Endothelial cell of umbilical vein (primary cell): ENCODE measurements at regions of chr18 and their contacts with region 1.

Region 1: GRCh38 chr18:12271376-12272235 is 17.4 kb downstream of the CIDEA start:
- DNase-seq: peak; percentile 85
- H3K4me3 ChIP-seq: peak overlapping the region; percentile 36 to 63 (median 45)
- H3K27ac ChIP-seq: peak overlapping the region; percentile 50
- H3K4me1 ChIP-seq: no peaks in the 10 kb centered on the region
- H3K27me3 ChIP-seq: no peaks in the 10 kb centered on the region
- CTCF ChIP-seq: peak; percentile 60 to 73
- POLR2A ChIP-seq: no peak

Region 2: DNA sequence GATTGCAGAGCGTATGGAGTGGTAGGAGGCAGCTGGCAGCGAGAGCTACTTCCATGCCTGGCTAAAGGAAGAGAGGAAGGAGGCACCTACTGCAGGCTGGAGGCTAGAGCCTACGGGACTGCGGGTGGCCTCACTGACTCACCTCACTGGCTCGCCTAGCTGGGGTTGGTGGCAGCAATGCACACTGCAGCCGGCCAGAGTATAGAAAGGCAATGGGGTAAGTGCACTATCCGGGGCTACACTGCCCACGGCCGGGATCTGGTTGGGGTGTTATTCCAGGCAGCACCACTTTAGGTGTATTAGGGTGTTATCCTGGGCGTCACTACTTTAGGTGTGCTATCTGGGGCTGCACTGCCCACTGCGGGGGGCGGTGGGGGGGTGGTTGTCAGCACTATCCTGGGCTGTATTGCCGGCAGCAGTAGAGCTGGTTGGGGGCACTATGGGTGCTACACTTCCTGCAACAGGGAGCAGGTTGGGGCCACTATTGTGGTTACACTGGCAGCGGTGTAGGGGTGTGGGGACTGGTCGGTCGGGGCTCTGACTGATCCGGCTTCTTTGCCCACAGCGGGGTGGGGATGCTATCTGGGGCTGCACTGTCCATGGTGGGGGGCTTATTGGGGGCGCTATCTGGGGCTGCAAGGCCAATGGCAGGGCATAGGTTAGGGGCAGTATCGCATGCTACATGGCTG is 211.3 kb before region 1 on chr18:
- CTCF ChIA-PET with region 1: no interaction called
- POLR2A ChIA-PET with region 1: no interaction called
- dilution Hi-C with region 1: no loop called
- intact Hi-C with region 1: no loop called
- DNase-seq: no peak
- H3K4me3 ChIP-seq: no peak overlapping the region
- H3K27ac ChIP-seq: no peak overlapping the region
- H3K4me1 ChIP-seq: no peaks in the 10 kb centered on the region
- H3K27me3 ChIP-seq: no peaks in the 10 kb centered on the region
- CTCF ChIP-seq: no peak
- POLR2A ChIP-seq: no peak

Region 3: DNA sequence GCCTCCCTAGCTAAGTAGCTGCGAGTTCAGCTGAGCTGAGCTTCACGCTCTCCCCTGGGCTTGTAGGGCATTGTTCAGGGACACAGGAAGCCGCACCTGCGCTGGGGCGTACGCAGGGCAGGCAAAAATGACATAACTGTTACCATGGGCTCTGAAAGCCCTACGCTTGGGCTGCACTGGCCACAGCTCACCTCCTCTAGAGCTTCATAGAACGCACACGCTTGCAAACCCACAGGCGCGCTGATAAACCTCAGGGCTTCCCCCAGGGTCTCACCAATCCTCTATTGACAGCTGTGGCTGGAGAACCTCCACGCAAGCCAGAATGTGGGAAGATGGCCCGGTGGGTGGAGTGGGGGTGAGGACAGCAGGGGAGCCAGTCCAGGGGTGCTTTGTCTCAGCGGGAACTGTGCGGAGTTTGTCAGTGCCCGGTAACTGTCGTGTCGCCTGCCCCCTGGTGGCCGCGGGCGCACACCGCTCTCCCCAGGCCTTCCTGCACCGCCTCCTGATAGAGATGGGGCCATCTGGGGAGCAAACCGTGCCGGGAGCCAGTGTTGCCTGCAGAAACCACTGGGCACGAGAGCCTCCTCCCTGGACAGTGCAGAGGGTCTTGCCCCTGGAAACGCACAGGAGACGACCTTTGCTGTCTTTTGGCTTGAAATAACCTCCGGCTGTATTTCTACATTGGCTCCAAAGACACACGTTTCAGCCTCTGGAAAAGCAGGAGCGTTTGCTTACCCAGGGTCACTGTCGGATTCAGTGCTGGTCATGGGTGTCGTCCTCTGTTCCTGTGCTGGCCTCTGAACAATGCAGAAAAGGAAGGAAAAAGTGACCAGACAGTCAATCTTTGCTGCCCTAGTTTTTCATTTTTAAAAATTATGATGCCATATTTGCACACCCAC is 34.4 kb before region 1 on chr18:
- CTCF ChIA-PET with region 1: interaction called, 35 read pairs
- POLR2A ChIA-PET with region 1: no interaction called
- dilution Hi-C with region 1: no loop called
- intact Hi-C with region 1: no loop called
- DNase-seq: peak; percentile 63
- H3K4me3 ChIP-seq: no peak overlapping the region
- H3K27ac ChIP-seq: no peak overlapping the region
- H3K4me1 ChIP-seq: peaks cover 12% of the 10 kb centered on the region
- H3K27me3 ChIP-seq: peaks cover 11 to 19% of the 10 kb centered on the region in 2 experiments
- CTCF ChIP-seq: peak; percentile 95 to 99
- POLR2A ChIP-seq: no peak

Region 4: DNA sequence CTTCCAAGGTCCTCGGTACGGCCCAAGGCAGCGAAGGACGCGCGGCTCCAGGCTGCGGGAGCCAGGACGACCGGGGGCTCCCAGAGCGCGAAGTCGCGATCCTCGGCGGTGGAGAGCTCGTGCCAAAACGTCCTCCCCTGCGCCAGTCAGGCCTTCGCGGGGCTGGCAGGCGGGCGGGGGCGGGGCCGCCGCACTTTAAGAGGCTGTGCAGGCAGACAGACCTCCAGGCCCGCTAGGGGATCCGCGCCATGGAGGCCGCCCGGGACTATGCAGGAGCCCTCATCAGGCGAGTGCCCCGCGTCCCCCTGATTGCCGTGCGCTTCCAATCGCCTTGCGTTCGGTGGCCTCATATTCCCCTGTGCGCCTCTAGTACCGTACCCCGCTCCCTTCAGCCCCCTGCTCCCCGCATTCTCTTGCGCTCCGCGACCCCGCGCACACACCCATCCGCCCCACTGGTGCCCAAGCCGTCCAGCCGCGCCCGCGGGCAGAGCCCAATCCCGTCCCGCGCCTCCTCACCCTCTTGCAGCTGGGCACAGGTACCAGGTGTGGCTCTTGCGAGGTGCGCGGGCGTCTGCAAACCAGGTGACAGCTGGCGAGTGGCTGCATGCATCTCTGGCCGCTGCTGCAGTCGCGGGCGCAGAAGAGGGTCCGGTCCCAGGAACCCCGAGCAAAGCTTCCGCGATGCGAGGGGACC is 17.3 kb before region 1 on chr18 and contains the start of gene CIDEA:
- CTCF ChIA-PET with region 1: interaction called, 36 read pairs
- POLR2A ChIA-PET with region 1: no interaction called
- dilution Hi-C with region 1: no loop called
- intact Hi-C with region 1: loop called (anchors 2 kb)
- DNase-seq: no peak
- H3K4me3 ChIP-seq: peak within 1 kb of the TSS in 2 of 3 experiments; percentile 7 to 39
- H3K27ac ChIP-seq: no peak within 1 kb of the TSS
- H3K4me1 ChIP-seq: peaks cover 26% of the 10 kb centered on the region
- H3K27me3 ChIP-seq: peaks cover 22 to 30% of the 10 kb centered on the region in 2 experiments
- CTCF ChIP-seq: no peak
- POLR2A ChIP-seq: no peak
- total RNA-seq, gene CIDEA: 0.42 and 1.8 TPM in 2 replicates

Region 5: GRCh38 chr18:12295901-12296386 is 24.3 kb after region 1 on chr18:
- CTCF ChIA-PET with region 1: interaction called, 36 read pairs
- POLR2A ChIA-PET with region 1: interaction called, 11 read pairs
- dilution Hi-C with region 1: no loop called
- intact Hi-C with region 1: loop called (anchors 1 kb)
- DNase-seq: no peak
- H3K4me3 ChIP-seq: no peak overlapping the region
- H3K27ac ChIP-seq: peak overlapping the region; percentile 85
- H3K4me1 ChIP-seq: peaks cover 14% of the 10 kb centered on the region
- H3K27me3 ChIP-seq: no peaks in the 10 kb centered on the region
- CTCF ChIP-seq: no peak
- POLR2A ChIP-seq: peak; percentile 42

Region 6: GRCh38 chr18:12317664-12318333 is 46.2 kb after region 1 on chr18:
- CTCF ChIA-PET with region 1: interaction called, 46 read pairs
- POLR2A ChIA-PET with region 1: interaction called, 3 read pairs
- dilution Hi-C with region 1: no loop called
- intact Hi-C with region 1: no loop called
- DNase-seq: no peak
- H3K4me3 ChIP-seq: no peak overlapping the region
- H3K27ac ChIP-seq: no peak overlapping the region
- H3K4me1 ChIP-seq: peaks cover 23% of the 10 kb centered on the region
- H3K27me3 ChIP-seq: no peaks in the 10 kb centered on the region
- CTCF ChIP-seq: no peak
- POLR2A ChIP-seq: no peak

Region 7: DNA sequence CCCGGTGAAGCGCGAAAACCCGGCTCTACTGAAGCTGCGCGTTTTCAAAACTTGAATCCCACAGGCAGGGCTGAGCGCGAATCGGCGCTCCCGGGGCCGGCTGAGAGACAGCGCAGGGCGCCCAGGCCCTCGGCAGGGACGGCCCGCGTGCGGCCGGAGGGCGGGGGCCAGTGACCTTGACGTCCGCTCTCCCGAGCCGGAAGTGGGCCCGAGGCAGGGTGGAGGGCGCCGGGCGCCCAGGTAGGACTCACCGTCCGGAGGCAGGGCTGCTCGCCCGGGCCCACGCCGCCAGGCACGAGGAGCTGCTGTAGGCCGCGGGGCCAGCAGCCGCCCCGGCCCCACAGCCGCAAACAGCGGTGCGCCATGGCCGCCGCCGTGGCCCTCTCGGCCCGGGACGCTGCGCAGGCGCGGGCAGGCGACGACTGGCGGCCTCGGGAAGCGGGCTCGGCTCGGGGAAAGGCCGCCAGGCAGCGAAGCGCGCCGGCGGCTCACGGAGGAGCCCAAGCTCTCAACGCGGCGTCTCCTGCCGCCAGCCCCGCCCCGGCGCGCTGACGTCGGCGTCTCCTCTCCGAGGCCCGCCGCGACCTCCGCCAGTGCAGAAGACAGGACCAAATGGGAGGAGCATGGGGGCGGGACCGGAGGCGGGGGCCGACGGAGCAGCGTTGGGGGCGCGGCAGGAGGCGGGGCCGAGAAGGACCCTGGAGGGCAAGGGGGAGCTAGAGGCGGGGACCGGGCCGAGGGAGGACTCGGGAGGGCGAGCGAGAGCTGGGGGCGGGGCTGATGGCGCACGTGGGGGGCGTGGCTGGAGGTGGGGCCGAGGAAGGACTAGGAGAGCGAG is 105.3 kb after region 1 on chr18 and contains the start of gene AFG3L2:
- CTCF ChIA-PET with region 1: interaction called, 12 read pairs
- POLR2A ChIA-PET with region 1: no interaction called
- dilution Hi-C with region 1: no loop called
- intact Hi-C with region 1: no loop called
- DNase-seq: peak; percentile 100
- H3K4me3 ChIP-seq: peak within 1 kb of the TSS; percentile 62 to 85 (median 72)
- H3K27ac ChIP-seq: peak within 1 kb of the TSS; percentile 89
- H3K4me1 ChIP-seq: peaks cover 9% of the 10 kb centered on the region
- H3K27me3 ChIP-seq: no peaks in the 10 kb centered on the region
- CTCF ChIP-seq: no peak
- POLR2A ChIP-seq: peak; percentile 93
- total RNA-seq, gene AFG3L2: 40.6 and 42.4 TPM in 2 replicates